ENCODE measurements at regions of chr1 and their contacts with region 1.

Region 1: GRCh38 chr1:197526736-197527371 is 248.4 kb downstream of the DENND1B start:
- DNase-seq: no peak
- ATAC-seq: no peak

Region 2: GRCh38 chr1:197675583-197676208 is 148.8 kb after region 1 on chr1:
- intact Hi-C with region 1: no loop called
- DNase-seq: no peak
- ATAC-seq: peak; percentile 79

Region 3: DNA sequence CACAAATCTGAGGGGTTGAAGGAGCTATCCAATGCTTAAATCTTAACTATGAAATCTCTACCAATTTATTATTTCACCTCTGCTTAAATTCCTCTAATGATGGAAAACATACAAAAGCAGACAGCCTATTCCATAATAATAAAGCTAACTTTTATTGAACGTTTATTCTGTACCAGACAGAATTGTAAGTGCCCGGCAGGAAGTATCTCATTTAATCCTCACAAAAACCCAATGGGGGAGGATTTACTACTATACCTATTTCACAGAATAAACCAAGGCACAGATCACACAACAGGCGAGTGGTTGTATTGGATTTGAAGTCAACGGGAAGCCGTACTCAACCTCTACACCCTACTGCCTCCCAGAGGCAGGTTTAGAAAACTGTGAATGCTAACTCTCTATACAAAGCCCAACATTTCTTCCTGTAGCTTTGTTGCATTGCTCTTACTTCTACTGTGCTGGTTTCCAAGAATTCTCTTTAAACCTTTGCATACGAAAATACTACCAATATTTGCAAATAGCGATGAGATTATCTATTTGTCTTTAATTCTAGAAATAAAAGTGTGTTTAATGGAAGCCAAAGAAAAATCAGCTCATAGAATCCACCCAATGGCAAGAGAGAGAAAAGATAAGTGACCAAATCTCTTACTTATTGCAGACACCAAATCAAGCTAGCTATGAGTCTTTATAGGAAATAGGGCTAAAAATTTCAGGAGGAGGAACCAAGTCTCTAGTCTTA is 342.1 kb after region 1 on chr1:
- intact Hi-C with region 1: loop called (anchors 5 kb)
- DNase-seq: no peak
- ATAC-seq: peak; percentile 86

Region 4: DNA sequence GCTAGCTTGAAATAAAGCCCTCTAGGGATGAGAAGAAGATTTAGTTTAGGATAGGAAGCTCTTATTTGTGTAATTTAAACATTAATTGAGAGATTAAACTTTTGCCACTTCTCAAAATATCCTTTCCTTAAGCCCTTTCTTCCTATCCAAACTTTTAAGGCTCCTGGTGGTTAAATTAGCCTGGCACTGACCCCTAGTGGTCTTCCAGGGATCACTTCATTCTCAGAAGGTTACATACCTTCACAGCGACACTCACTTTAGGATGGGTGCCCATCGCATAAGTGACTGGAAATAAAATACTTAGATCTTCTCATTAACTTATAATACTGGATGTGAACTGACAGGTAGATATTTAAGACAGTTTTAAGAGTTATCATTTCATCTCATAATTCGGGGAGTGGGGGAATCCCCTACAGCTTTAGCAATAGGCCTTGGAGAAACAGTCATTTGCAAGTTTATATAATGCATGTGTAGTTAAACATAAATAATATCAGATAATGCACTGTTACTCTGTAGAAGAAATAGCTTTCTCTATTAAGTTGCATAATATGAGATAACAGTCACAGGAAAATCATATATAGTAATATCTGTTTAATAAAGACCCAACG is 397.8 kb after region 1 on chr1:
- intact Hi-C with region 1: loop called (anchors 5 kb)
- DNase-seq: no peak
- ATAC-seq: no peak

Measured in Right ventricle myocardium inferior (tissue), 1 donor.